Activated CD4-positive, alpha-beta T cell treated with anti-CD3 and anti-CD28 coated beads, Interleukin-2, amount 10 ng/mL, durations not matched to agents 24 days and 14 days (primary cell): ENCODE measurements at regions of chrX and their contacts with region 1.

Region 1: DNA sequence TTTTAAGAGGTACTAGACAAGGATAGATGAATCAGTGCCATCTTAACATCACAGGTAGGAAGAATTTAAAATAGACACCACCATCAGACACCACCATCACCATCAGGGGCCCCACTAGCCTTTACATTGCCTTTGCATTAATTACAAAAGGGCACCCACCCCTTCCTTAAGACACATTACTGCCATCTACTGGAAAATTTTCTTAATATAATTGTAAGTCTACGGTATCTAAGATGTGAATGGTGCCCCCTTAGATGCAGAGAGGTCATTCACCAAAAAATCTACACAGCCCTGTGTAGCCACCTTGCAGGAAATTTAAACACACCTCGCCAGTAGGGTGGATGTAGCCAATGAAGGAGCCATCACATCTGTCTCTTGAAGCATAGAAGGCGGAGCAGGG is 184.1 kb downstream of the MID1IP1 start:
- DNase-seq: peak; percentile 52
- H3K4me3 Mint-ChIP-seq: no peak overlapping the region
- H3K27ac Mint-ChIP-seq: no peak overlapping the region
- H3K4me1 Mint-ChIP-seq: peaks cover 1% of the 10 kb centered on the region
- H3K27me3 Mint-ChIP-seq: peaks cover 4% of the 10 kb centered on the region

Region 2: GRCh38 chrX:38754102-38754790 is 231.1 kb before region 1 on chrX:
- intact Hi-C with region 1: loop called (anchors 1 kb)
- DNase-seq: peak; percentile 71
- H3K4me3 Mint-ChIP-seq: no peak overlapping the region
- H3K27ac Mint-ChIP-seq: no peak overlapping the region
- H3K4me1 Mint-ChIP-seq: peaks cover 2% of the 10 kb centered on the region
- H3K27me3 Mint-ChIP-seq: no peaks in the 10 kb centered on the region

Region 3: GRCh38 chrX:38768079-38768478 is 217.3 kb before region 1 on chrX:
- intact Hi-C with region 1: loop called (anchors 1 kb)
- DNase-seq: peak; percentile 54
- H3K4me3 Mint-ChIP-seq: no peak overlapping the region
- H3K27ac Mint-ChIP-seq: no peak overlapping the region
- H3K4me1 Mint-ChIP-seq: no peaks in the 10 kb centered on the region
- H3K27me3 Mint-ChIP-seq: no peaks in the 10 kb centered on the region

Region 4: DNA sequence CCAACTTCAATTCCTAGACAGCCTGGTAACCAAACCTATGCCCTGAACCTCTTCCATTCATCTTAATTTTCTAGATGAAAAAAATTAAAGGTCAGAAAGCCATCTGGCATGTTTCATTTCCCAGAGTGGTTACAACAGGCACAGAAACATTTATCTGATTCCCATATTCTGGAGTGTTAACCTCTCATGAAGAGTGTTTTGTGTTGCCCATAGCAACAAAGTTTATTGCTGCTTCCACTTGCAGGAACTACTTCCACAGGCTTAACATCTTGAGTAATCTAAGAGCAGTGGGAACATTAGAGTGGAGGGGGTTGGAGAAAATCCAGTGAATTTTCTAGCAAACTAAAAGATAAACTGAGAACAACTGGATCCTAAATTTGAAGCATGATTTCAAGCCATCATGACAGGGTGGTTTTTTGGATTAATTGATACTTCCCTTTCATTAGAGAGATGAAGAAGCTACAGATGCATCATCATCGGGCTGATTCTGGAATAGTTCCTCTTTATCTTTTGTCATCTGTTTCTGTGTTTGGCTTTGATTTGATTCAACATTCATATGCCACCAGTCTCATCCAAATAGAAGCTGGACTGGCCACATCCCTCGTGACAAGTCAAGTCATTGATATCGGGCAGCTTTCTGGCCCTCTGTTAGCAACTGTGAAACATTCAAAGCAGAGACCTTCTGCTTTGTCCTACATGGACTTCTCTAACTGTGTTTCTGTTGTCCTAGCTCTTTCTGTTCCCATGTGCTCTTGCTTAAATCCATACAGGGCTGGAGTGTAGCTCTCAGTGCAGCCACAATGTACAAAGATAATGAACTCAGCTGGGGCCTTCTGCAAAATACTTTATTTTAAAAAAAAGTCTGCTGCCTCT is 16.8 kb before region 1 on chrX:
- intact Hi-C with region 1: no loop called
- DNase-seq: no peak
- H3K4me3 Mint-ChIP-seq: no peak overlapping the region
- H3K27ac Mint-ChIP-seq: no peak overlapping the region
- H3K4me1 Mint-ChIP-seq: peaks cover 7% of the 10 kb centered on the region
- H3K27me3 Mint-ChIP-seq: no peaks in the 10 kb centered on the region